Naive thymus-derived CD4-positive, alpha-beta T cell (primary cell): ENCODE measurements at regions of chr10 and their contacts with region 1.

Region 1: DNA sequence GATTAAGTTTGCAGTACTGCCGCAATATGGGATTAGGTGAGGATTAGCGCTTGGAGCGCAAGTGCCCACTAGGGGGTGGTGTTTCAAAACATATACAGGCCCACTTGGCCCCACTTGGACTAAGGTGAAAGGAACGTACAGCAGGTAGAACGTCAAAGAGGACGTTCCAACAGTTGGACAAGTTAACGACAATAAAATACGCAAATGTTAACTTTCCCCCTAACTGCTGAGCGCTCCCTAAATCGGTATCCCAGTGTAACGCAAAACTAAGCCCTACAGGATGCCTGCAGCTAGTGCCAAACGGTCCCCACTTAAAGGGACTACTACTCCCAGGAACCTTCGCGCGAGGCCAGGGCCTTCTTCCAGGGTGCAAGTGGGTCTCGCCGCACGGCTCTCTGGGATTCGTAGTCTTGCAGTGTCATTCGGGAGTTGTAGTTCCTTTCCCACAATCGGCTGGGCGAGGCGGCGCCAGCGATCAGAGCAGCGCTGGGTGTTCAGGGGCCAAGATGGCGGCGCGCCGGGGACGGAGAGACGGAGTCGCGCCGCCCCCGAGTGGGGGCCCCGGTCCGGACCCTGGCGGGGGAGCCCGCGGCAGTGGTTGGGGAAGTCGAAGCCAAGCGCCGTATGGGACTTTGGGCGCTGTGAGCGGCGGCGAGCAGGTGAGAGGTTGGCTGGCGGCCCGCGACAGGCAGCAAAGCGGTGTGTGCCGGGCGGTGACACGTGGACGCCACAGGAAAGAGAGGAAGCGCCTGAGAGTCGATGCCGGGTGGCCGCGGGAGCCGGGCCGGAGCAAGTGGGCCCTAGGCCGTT is at the start of gene PPRC1:
- DNase-seq: peak; percentile 88 to 98 (median 97)
- ATAC-seq: peak; percentile 97
- H3K4me3 ChIP-seq: peak within 1 kb of the TSS; percentile 80
- H3K4me3 Mint-ChIP-seq: peak within 1 kb of the TSS; percentile 90 to 99 (median 98)
- H3K27ac ChIP-seq: peak within 1 kb of the TSS; percentile 89
- H3K27ac Mint-ChIP-seq: peak within 1 kb of the TSS; percentile 89 to 99 (median 96)
- H3K4me1 ChIP-seq: peaks cover 15 to 26% of the 10 kb centered on the region in 2 donors
- H3K4me1 Mint-ChIP-seq: peaks cover 29 to 53% (median 47%) of the 10 kb centered on the region in 7 donors
- H3K27me3 ChIP-seq: no peaks in the 10 kb centered on the region
- H3K27me3 Mint-ChIP-seq: no peaks in the 10 kb centered on the region
- total RNA-seq, gene PPRC1: 33.7 to 56.5 (median 40.6) TPM

Region 2: GRCh38 chr10:101818119-101818871 is 314.5 kb before region 1 on chr10 and contains the start of gene OGA:
- CTCF ChIA-PET with region 1: no interaction called
- POLR2A ChIA-PET with region 1: interaction called, 3 read pairs
- intact Hi-C with region 1: loop called (anchors 5 kb)
- DNase-seq: peak; percentile 90 to 100 (median 99)
- ATAC-seq: peak; percentile 97
- H3K4me3 ChIP-seq: peak within 1 kb of the TSS; percentile 81
- H3K4me3 Mint-ChIP-seq: peak within 1 kb of the TSS; percentile 95 to 100 (median 97)
- H3K27ac ChIP-seq: peak within 1 kb of the TSS; percentile 82
- H3K27ac Mint-ChIP-seq: peak within 1 kb of the TSS; percentile 95 to 99 (median 98)
- H3K4me1 ChIP-seq: peaks cover 19 to 25% of the 10 kb centered on the region in 2 donors
- H3K4me1 Mint-ChIP-seq: peaks cover 34 to 57% (median 50%) of the 10 kb centered on the region in 7 donors
- H3K27me3 ChIP-seq: no peaks in the 10 kb centered on the region
- H3K27me3 Mint-ChIP-seq: peaks cover 0 to 4% (median 0%) of the 10 kb centered on the region in 5 donors
- total RNA-seq, gene OGA: 154 to 338 (median 321) TPM

Region 3: DNA sequence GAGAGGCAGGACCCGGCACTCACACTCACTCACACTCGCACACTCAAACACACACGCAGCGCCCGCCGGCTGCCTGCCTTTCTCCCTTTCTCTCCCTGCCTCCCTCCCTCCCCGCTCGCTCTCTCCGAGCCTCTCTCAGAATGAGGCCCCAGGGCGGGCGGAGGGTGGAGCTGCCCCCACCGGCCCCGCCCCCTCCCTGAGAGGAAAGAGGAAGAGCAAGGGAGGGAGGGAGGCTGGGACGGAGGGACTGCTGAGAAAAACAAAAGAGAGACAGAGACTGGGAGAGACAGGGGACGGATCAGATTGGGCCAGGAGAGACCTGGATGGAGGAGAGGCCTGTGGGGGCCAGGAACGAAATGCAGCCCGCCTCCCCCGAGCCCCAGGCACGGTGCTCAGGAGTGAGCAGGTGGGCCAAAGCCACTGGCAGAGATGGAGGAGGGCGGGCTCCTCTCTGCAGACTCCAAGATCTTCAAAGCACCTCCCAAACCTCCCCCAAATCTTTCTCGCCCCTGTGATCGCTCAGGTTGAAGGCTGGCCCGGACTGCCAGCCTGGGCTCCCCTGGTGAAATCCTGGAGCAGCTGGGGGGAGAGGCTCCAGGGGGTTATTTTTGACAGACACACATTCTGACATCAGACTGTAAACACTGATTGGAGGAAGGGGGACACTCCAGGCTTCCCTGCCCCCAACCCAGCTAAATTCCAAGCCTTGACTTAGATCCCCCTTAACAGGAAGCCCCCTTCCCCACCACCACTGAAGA is 17.7 kb before region 1 on chr10:
- CTCF ChIA-PET with region 1: interaction called, 6 read pairs
- POLR2A ChIA-PET with region 1: interaction called, 15 read pairs
- intact Hi-C with region 1: loop called (anchors 1 kb)
- DNase-seq: peak; percentile 61 to 83 (median 70)
- ATAC-seq: peak; percentile 86
- H3K4me3 ChIP-seq: peak overlapping the region; percentile 77
- H3K4me3 Mint-ChIP-seq: peak overlapping the region; percentile 84 to 97 (median 92)
- H3K27ac ChIP-seq: peak overlapping the region; percentile 97
- H3K27ac Mint-ChIP-seq: peak overlapping the region; percentile 80 to 98 (median 92)
- H3K4me1 ChIP-seq: peaks cover 49 to 58% of the 10 kb centered on the region in 2 donors
- H3K4me1 Mint-ChIP-seq: peaks cover 54 to 76% (median 67%) of the 10 kb centered on the region in 7 donors
- H3K27me3 ChIP-seq: no peaks in the 10 kb centered on the region
- H3K27me3 Mint-ChIP-seq: no peaks in the 10 kb centered on the region

Region 4: GRCh38 chr10:102225646-102226541 is 93.1 kb after region 1 on chr10 and contains the start of gene ELOVL3:
- CTCF ChIA-PET with region 1: no interaction called
- POLR2A ChIA-PET with region 1: no interaction called
- intact Hi-C with region 1: loop called in 1 of 2 experiments (anchors 1 kb)
- DNase-seq: peak; percentile 56 to 83 (median 79)
- ATAC-seq: peak; percentile 95
- H3K4me3 ChIP-seq: peak within 1 kb of the TSS; percentile 26
- H3K4me3 Mint-ChIP-seq: peak within 1 kb of the TSS; percentile 72 to 95 (median 80)
- H3K27ac ChIP-seq: no peak within 1 kb of the TSS
- H3K27ac Mint-ChIP-seq: peak within 1 kb of the TSS in 5 of 9 donors; percentile 14 to 78 (median 74)
- H3K4me1 ChIP-seq: peaks cover 20 to 22% of the 10 kb centered on the region in 2 donors
- H3K4me1 Mint-ChIP-seq: peaks cover 14 to 23% (median 21%) of the 10 kb centered on the region in 7 donors
- H3K27me3 ChIP-seq: peaks cover 3 to 5% of the 10 kb centered on the region in 2 donors
- H3K27me3 Mint-ChIP-seq: peaks cover 36 to 74% (median 39%) of the 10 kb centered on the region in 5 donors
- total RNA-seq, gene ELOVL3: not detected

Region 5: DNA sequence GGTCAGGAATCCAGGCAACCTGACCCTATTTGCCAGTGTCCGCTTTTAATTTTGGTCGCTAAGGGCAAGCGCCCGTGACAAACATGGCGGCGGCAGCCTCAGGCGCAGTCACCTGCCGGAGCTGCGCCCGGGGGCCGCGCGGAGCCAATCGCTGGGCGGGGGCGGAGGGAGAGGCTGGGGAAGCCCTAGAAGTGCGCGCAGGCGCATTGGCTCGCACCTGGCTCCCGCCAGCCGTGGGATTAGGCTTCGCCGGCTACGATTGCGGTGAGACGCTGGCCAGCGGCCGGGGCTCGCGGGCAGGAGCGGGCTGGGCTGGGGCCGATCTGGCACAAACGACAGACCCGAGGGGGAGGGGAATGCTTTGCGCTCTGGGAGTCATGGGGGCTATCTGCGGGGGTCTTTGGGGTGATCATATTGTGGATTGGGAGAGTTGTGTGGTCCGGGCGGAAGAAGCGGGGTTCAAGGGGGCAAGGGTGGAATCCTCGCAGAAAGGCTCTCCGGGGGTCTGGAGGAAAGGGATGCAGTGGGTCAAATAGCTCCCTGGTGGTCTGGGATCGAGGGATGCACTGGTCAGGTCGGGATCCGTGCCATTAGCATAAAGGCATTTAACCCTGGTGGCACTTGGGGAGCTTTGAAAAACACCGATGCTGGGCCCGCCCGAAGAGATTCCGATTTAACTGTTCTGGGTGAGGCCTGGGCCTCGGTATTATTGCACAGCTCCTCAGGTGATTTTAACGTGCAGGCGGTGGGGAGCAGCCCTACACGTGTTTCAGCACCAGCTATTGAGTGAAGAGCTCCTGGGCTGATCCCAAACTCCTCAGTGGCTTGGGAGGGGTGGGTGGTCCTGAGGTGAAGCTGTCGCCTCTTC is 328.7 kb after region 1 on chr10:
- CTCF ChIA-PET with region 1: no interaction called
- POLR2A ChIA-PET with region 1: no interaction called
- intact Hi-C with region 1: loop called (anchors 1 to 5 kb)
- DNase-seq: peak; percentile 84 to 95 (median 90)
- ATAC-seq: peak; percentile 99
- H3K4me3 ChIP-seq: peak overlapping the region; percentile 93
- H3K4me3 Mint-ChIP-seq: peak overlapping the region; percentile 83 to 96 (median 92)
- H3K27ac ChIP-seq: peak overlapping the region; percentile 74
- H3K27ac Mint-ChIP-seq: peak overlapping the region; percentile 72 to 90 (median 85)
- H3K4me1 ChIP-seq: peaks cover 9 to 14% of the 10 kb centered on the region in 2 donors
- H3K4me1 Mint-ChIP-seq: peaks cover 19 to 40% (median 34%) of the 10 kb centered on the region in 7 donors
- H3K27me3 ChIP-seq: no peaks in the 10 kb centered on the region
- H3K27me3 Mint-ChIP-seq: peaks cover 0 to 2% (median 0%) of the 10 kb centered on the region in 5 donors

Region 6: DNA sequence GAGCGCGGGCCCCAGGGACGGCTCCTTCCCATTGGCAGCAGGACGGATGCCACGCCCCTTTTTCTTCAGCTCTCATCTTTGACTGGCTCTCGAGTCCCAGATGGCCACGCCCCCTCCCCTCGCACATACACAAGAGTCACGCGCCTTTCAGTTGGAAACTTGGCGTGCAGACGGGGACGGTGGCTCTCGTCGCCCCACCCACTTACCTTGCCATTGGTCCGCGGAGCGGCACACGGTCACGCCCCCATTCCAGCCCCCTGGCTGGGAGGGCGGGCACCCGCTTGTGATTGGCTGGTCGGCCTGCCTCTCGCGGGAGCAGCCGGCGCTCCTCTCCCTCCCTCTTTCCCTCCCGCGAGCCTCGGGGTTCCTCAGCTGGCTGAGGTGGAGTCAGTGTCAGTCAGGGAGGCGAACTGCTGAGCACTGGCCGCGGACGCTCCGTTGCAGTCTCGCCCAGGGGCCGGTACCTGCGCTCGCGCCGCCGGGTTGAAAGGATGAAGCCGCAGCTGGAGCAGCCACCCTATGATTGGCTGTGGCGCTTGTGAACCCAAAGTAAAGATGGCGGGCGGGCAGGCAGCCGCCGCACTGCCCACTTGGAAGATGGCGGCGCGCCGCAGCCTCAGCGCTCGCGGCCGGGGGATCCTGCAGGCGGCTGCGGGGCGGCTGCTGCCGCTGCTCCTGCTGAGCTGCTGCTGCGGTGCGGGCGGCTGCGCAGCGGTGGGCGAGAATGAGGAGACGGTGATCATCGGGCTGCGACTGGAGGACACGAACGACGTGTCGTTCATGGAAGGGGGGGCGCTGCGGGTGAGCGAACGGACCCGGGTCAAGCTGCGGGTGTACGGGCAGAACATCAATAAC is 785.4 kb after region 1 on chr10 and contains the start of gene CNNM2:
- CTCF ChIA-PET with region 1: no interaction called
- POLR2A ChIA-PET with region 1: no interaction called
- intact Hi-C with region 1: loop called in 1 of 2 experiments (anchors 5 kb)
- DNase-seq: peak; percentile 95 to 100 (median 99)
- ATAC-seq: peak; percentile 95
- H3K4me3 ChIP-seq: peak within 1 kb of the TSS; percentile 98
- H3K4me3 Mint-ChIP-seq: peak within 1 kb of the TSS; percentile 94 to 99 (median 96)
- H3K27ac ChIP-seq: peak within 1 kb of the TSS; percentile 83
- H3K27ac Mint-ChIP-seq: peak within 1 kb of the TSS; percentile 82 to 97 (median 94)
- H3K4me1 ChIP-seq: peaks cover 34 to 35% of the 10 kb centered on the region in 2 donors
- H3K4me1 Mint-ChIP-seq: peaks cover 41 to 68% (median 56%) of the 10 kb centered on the region in 7 donors
- H3K27me3 ChIP-seq: no peaks in the 10 kb centered on the region
- H3K27me3 Mint-ChIP-seq: peaks cover 0 to 14% (median 5%) of the 10 kb centered on the region in 5 donors
- total RNA-seq, gene CNNM2: 9.3 to 17.5 (median 12.0) TPM